Activated T-helper 2 cell treated with anti-CD3 and anti-CD28 coated beads, Interferon-gamma antibody, Interleukin-2, Interleukin-4, amounts not matched to agents 10 μg/mL and 5 μg/mL and 100 μg/mL, durations not matched to agents 14 hours and 24 hours and 36 hours (primary cell): ENCODE measurements at regions of chr4 and their contacts with region 1.

Region 1: GRCh38 chr4:187606581-187606980 is 389.0 kb upstream of the ZFP42 start:
- DNase-seq: no peak
- H3K4me3 Mint-ChIP-seq: no peak overlapping the region
- H3K27ac Mint-ChIP-seq: no peak overlapping the region
- H3K4me1 Mint-ChIP-seq: no peaks in the 10 kb centered on the region
- H3K27me3 Mint-ChIP-seq: no peaks in the 10 kb centered on the region

Region 2: DNA sequence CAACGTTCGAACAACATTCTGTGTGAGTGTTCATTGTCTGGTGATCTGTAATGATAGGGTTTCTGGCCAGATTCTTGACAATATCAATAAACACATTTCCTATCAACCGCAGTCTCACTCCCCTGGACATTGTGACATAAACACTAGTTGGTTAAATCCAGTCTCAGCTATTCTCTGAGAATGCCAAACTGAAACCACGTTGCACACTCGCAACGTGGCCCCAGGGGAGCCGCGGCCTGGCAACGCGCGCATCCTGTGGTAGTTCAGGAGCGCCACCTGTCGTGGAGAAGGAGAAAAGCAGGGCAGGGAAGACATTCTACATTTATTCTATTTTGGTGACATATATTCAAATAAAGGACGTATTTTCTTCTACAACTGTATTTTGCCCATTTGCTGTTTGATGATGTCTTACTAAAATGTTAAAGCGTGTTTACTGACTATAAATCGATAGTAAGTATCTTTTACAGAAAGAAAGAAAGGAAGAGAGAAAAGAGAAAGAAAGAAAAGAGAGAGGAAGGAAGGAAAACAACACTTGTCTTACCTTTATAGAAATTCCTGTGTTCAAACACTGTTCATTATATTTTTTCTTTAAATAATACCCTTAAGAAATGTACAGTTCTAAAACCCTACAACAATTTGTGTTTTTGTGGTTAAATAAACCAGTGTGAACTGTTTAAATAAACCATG is 1595.7 kb after region 1 on chr4:
- intact Hi-C with region 1: loop called (anchors 2 kb)
- DNase-seq: peak; percentile 9
- H3K4me3 Mint-ChIP-seq: peak overlapping the region; percentile 73
- H3K27ac Mint-ChIP-seq: peak overlapping the region; percentile 63
- H3K4me1 Mint-ChIP-seq: peaks cover 10% of the 10 kb centered on the region
- H3K27me3 Mint-ChIP-seq: no peaks in the 10 kb centered on the region